ENCODE measurements at regions of chr1 and their contacts with region 1.

Region 1: DNA sequence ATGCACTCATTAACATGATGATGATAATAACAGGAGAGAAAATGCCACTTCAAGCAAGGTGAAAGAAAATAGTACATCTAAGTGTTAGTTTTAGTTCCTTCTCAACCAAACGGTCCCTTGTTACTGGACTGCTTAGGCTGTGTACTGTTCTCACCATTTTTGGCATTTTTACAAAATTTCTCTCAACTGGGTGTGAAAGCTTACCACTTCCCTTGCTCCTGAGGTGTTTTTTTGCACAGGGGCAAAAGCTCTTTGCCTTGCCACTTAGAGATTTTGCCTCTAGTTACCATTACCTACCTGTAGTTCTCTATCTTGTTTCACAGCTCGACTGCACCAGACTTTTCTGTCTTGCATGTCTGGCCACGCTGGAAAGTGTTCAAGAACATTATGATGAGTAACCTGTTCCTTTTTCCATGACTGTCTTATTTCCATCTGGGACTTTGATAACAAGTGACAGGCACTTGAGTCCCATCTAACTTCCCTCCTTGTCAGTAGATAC is 10.7 kb downstream of the NEK7 start:
- DNase-seq: no peak
- ATAC-seq: peak; percentile 60 to 74

Region 2: DNA sequence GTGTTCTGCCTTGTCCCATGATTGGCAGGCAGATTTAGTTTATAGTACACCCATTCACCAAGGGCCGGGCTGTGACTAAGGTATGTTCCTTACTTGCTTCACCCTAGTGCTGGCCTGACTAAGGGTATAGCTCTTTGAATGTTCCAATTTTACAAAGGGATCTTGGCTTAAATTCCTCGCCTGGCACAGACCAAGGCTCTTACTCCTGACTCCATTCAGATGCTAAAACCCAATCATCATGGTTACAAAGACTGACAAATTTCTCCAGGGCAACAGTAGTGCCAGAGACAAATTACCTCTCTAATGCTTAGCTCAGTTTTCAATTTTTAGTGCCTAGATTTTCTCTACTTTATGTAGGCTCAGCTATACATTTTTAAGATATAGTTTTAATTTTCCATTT is 276.5 kb before region 1 on chr1:
- intact Hi-C with region 1: no loop called
- DNase-seq: no peak
- ATAC-seq: no peak

Region 3: DNA sequence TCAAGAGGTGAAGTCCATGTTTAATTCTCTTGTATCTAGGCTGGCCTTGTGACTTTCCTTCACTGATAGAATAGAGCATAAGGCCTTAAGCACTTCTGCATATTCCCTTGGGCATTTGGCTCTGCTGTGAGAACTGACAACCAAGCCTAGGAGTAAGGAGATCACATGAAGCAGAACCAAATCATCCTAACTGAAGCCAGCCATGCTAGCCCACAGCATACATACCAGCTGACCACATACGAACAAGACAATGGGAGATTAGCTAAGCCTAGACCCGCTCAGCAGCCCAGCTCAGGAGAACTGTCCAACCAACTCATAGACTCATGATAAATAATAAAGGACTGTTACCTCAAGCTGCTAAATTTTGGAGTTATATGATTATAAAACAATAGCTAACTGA is 125.3 kb before region 1 on chr1:
- intact Hi-C with region 1: no loop called
- DNase-seq: no peak
- ATAC-seq: no peak

Region 4: GRCh38 chr1:198265073-198265661 is 97.7 kb after region 1 on chr1:
- intact Hi-C with region 1: loop called in 1 of 2 experiments (anchors 5 kb)
- DNase-seq: no peak
- ATAC-seq: peak; percentile 83 to 88